PC-3 (cell line): ENCODE measurements at regions of chr13 and their contacts with region 1.

Region 1: DNA sequence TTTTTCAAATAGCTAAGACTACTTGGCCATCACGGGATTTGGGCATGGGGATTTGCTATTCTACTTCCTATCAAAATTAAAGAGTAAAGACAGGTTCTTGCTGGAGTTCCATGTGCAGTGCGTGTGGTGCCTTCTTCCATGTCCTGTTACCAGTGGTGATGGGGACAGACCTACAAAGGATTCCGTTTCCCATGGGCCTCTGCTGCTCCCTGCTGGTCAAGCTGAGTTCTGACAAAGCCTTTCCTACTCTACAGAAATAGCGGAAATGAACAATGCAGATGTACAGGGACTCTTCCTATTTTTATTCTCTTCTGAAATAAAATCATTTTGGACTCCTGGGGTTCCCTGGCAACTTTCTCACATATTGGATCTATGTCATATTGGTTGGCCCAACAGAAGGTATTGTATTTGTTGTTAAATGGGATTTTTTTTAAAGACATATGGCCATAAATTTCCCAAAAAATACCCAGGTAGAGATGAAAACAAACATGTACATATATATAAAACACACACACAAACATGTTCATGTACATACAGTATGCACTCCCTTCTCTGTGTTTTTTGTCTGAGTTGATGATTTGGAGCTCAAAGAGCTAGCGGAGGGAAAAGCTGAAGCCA is 90.5 kb upstream of the SLC15A1 start:
- DNase-seq: peak; percentile 69
- ATAC-seq: peak; percentile 82
- H3K4me3 ChIP-seq: no peak overlapping the region
- H3K27ac ChIP-seq: no peak overlapping the region
- H3K4me1 ChIP-seq: peaks cover 5% of the 10 kb centered on the region
- H3K27me3 ChIP-seq: no peaks in the 10 kb centered on the region
- CTCF ChIP-seq: peak; percentile 77

Region 2: DNA sequence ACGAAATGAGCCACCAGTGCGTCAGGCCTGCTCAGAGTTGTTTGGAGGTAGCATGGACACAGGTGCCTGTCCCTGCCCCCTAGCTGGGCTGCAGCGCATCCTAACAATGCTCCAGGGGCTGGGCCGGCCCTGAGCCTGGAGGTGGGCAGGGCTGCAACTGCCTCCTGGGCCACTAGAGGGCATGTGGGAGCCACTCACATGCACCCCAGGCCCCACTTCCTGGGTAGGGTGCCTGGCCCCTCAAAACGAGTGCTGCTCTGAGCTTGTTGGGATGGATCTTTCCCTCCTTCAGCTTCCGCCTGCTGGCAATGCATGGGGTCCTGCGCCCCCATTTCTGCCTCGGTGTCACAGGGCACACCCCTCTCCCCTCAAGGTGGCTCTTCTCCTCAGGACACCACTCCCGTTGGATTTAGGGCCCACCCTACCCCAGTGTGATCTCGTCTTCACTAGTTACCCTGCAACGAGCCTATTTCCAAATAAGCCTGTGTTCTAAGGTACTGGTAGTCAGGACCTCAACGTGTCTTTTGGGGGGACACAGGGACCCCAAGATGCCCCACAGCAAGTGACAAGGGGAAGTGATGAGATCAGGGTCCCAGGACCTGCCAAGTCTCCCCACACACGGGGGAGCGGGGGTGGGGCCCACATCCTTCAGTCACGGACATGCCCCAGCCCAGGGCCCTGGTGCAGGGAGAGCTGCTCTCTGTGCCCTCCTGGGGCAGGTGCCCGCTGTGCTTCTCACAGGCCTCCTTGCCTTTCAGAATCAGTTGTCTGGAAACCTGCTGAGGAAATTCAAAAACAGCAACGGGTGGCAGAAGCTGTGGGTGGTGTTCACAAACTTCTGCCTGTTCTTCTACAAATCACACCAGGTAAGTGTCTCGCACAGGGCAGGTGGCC is 397.4 kb before region 1 on chr13:
- CTCF ChIA-PET with region 1: no interaction called
- POLR2A ChIA-PET with region 1: no interaction called
- intact Hi-C with region 1: loop called (anchors 2 kb)
- DNase-seq: peak; percentile 72
- ATAC-seq: peak; percentile 79
- H3K4me3 ChIP-seq: no peak overlapping the region
- H3K27ac ChIP-seq: no peak overlapping the region
- H3K4me1 ChIP-seq: peaks cover 17% of the 10 kb centered on the region
- H3K27me3 ChIP-seq: no peaks in the 10 kb centered on the region
- CTCF ChIP-seq: peak; percentile 80

Region 3: DNA sequence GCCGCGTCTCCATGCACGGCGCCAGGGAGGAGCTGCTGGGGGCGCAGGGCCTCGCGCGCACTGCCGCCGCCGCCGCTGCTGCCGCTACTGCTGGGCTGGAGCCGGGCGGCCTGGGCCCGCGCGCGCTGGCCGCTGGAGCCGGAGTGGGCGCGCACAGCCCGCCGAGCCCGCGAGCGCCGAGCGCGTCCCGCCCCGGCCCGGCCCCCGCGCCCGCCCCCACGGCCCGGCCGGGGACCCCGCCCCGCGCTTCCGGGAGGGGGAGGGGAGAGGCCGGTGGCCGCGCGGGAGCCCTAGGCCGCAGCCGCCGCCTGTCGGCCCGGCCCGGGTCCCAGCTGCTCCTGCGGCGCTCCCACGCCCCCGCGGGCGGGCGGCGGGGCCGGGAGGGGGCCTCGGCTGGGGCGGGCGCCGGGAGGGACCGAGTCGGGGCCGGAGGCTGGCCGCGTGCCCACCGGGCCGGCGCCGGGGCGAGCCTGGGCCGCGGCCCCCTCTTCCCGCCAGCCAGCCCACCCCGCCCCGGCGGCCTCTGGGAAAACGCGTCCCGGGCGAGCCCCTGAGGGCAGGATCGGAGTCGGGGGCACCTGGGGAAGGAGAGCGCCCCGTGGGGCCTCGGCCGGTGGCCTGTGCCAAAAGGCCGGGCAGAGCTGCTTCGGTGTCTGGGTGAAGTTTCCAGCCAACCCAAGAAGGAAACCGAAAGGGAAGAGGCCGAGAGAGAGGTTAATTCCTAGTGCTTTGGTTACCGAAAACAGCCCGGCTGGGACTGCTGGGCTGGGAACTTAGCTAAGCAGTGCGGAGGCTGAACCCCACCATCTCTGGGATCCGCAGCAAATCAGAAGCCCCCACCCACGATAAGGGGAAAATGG is 265.8 kb before region 1 on chr13 and contains the start of gene STK24:
- CTCF ChIA-PET with region 1: no interaction called
- POLR2A ChIA-PET with region 1: no interaction called
- intact Hi-C with region 1: loop called (anchors 10 kb)
- DNase-seq: peak; percentile 69
- ATAC-seq: peak; percentile 62
- H3K4me3 ChIP-seq: peak within 1 kb of the TSS; percentile 99
- H3K27ac ChIP-seq: peak within 1 kb of the TSS; percentile 55
- H3K4me1 ChIP-seq: peaks cover 30% of the 10 kb centered on the region
- H3K27me3 ChIP-seq: no peaks in the 10 kb centered on the region
- CTCF ChIP-seq: no peak
- total RNA-seq, gene STK24: 52.4 and 57.0 TPM in 2 replicates

Region 4: DNA sequence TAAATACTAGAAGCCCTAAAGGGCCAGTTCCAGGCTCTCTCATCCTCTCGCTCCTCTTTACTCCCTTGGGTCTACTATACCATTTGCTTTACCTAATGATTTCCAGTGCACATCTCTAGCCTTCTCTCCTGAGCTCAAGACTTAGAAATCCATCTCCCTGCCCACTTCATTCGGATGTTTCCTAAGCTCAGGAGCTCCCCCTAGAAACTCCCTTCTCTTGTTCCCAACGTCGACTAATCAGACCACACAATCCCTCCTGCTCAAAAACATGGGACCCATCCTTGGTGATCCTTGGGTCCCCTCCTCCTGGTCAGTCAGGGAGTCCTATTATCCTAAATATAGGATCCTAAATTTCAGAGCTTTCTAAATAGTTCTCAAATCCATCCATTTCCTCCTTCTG is 244.9 kb before region 1 on chr13:
- CTCF ChIA-PET with region 1: no interaction called
- POLR2A ChIA-PET with region 1: no interaction called
- intact Hi-C with region 1: no loop called
- DNase-seq: no peak
- ATAC-seq: no peak
- H3K4me3 ChIP-seq: no peak overlapping the region
- H3K27ac ChIP-seq: no peak overlapping the region
- H3K4me1 ChIP-seq: no peaks in the 10 kb centered on the region
- H3K27me3 ChIP-seq: no peaks in the 10 kb centered on the region
- CTCF ChIP-seq: no peak; the same call in 1 of the 2 replicates

Region 5: GRCh38 chr13:98672944-98673545 is 169.9 kb before region 1 on chr13:
- CTCF ChIA-PET with region 1: interaction called, 4 read pairs
- POLR2A ChIA-PET with region 1: no interaction called
- intact Hi-C with region 1: loop called (anchors 2 kb)
- DNase-seq: peak; percentile 79
- ATAC-seq: peak; percentile 94
- H3K4me3 ChIP-seq: peak overlapping the region; percentile 57; the same call in 1 of the 2 replicates
- H3K27ac ChIP-seq: 0 out of 2 replicates have a peak overlapping the region, but pooled peaks have one; percentile 8
- H3K4me1 ChIP-seq: peaks cover 11% of the 10 kb centered on the region
- H3K27me3 ChIP-seq: no peaks in the 10 kb centered on the region
- CTCF ChIP-seq: peak; percentile 91

Region 6: GRCh38 chr13:99033814-99034213 is 190.8 kb after region 1 on chr13:
- CTCF ChIA-PET with region 1: interaction called, 4 read pairs
- POLR2A ChIA-PET with region 1: no interaction called
- intact Hi-C with region 1: loop called (anchors 1 kb)
- DNase-seq: peak; percentile 48
- ATAC-seq: peak; percentile 66
- H3K4me3 ChIP-seq: no peak overlapping the region
- H3K27ac ChIP-seq: no peak overlapping the region
- H3K4me1 ChIP-seq: peaks cover 9% of the 10 kb centered on the region
- H3K27me3 ChIP-seq: no peaks in the 10 kb centered on the region
- CTCF ChIP-seq: peak; percentile 69